Esophagus muscularis mucosa (tissue), 4 donors: ENCODE measurements at regions of chr11 and their contacts with region 1.

Region 1: GRCh38 chr11:66855574-66856495 is 1.0 kb upstream of the LRFN4 start:
- DNase-seq: peak; percentile 96
- H3K4me3 ChIP-seq: peak overlapping the region; percentile 68 to 82 (median 77)
- H3K27ac ChIP-seq: peak overlapping the region; percentile 84 to 92 (median 90)
- H3K4me1 ChIP-seq: peaks cover 6 to 33% (median 17%) of the 10 kb centered on the region in 4 donors
- H3K27me3 ChIP-seq: no peaks in the 10 kb centered on the region
- CTCF ChIP-seq: no peak
- EP300 ChIP-seq: no peak
- POLR2A ChIP-seq: peak; percentile 66

Region 2: DNA sequence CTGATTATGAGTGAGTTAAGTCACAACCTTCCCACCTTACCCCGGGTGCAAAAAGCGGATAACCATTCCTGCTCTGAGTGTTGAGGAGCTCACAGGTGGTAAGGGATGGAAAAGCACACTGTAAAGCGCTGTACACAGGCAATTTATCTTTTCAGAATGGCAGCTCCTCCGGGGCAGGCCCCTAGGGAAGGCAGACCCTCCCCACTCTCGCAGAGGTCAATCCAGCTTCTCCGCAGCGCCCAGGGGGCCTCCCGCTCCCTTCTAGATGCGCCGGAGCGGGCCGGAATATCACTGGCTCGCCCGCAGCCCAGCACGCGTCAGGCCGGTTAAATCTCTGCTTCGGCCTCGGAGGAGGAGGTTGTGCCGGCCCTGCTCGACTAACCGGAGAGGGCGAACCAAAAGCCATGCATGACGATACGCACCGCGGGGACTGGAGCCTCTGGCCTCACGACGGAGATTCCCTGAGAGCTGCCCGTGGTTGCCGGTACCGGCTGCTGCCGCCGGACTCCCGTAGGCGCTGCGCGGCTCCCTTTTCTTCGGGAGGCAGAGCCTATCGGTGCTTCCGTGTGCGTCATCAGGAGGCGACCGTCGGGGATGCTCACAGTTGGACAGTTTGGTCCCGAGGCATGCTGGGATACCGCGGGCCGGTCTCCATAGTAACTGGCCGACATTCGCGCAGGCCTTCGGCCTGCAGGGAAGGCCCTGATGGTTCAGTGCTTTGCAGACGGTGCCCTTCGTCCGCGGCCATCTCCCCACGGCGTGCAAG is 511.1 kb before region 1 on chr11 and contains the start of gene BRMS1:
- intact Hi-C with region 1: loop called (anchors 10 kb)
- DNase-seq: peak; percentile 99
- H3K4me3 ChIP-seq: peak within 1 kb of the TSS; percentile 70 to 96 (median 80)
- H3K27ac ChIP-seq: peak within 1 kb of the TSS; percentile 84 to 95 (median 94)
- H3K4me1 ChIP-seq: peaks cover 29 to 52% (median 44%) of the 10 kb centered on the region in 4 donors
- H3K27me3 ChIP-seq: no peaks in the 10 kb centered on the region
- CTCF ChIP-seq: peak; percentile 24 to 51 (median 42)
- EP300 ChIP-seq: no peak
- POLR2A ChIP-seq: peak; percentile 79
- total RNA-seq, gene BRMS1: 22.8 to 35.1 (median 34.1) TPM